ENCODE measurements at regions of chr18 and their contacts with region 1.

Region 1: DNA sequence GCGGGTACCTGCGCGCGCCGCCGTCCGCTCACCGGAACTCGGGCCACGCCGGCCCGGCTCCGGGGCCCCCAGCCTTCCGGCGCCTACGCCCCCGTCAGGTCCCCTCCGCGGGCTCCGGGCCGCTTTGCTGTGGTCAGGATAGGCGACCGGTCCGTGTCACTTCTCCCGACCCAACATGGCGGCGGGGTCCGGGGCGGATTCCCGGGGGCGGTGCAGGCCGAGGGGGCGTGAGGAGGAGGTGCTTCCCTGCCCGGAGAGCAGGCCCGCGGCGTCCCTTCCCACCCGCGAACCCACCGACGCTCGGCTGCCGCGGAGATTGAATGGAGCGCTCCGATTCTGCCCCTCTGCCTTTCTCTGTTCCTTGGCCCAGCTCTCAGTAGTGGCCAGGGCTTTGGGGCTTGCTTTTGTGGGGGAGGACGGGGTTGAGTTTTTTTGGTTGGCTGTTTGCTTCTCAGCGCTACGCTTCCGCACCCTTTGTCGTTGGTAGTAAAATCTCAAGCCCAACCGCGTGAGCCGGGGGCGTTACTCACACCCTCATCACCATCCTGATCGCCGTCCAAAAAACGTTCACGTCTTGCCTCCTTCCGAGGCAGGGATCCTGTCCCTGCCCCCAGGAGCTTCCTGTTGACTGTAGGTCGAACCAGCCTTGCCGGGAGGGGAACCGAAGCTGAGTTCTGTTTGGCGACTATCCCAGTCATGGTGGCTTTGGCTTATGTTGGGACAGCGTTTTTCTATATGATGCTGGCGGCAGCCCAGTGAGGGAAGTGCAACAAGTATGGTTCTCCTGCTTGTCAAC is 532 bp upstream of the YES1 start:
- DNase-seq: peak; percentile 87 to 88
- ATAC-seq: peak; percentile 62 to 82 (median 70)
- H3K4me3 ChIP-seq: peak overlapping the region; percentile 95
- H3K4me3 Mint-ChIP-seq: peak overlapping the region; percentile 98
- H3K27ac ChIP-seq: peak overlapping the region; percentile 93
- H3K27ac Mint-ChIP-seq: peak overlapping the region; percentile 98 to 99
- H3K4me1 ChIP-seq: peaks cover 40% of the 10 kb centered on the region
- H3K4me1 Mint-ChIP-seq: peaks cover 74 to 75% of the 10 kb centered on the region in 2 donors
- H3K27me3 ChIP-seq: no peaks in the 10 kb centered on the region
- H3K27me3 Mint-ChIP-seq: no peaks in the 10 kb centered on the region
- CTCF ChIP-seq: no peak

Region 2: DNA sequence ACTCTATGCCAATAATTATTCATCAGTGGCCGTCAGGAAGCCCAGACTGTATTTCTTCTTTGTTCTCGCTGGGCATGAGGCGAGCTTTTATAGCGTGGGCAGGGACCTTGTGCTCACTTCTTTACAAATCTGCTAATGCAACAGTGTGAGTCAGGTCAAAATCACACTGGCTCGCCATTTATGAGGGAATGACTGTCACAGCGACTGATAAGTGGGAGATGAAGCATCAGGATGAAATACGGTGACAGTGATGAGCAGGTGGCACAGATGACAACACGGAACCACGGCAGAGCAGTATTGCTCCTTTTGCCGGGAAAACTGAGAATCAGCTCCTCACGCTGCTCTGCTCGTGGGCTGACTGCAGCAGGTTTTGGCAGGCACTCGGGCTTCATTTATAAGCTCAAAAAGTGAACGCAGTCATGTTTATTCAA is 134.6 kb before region 1 on chr18:
- intact Hi-C with region 1: no loop called
- DNase-seq: no peak
- ATAC-seq: no peak
- H3K4me3 ChIP-seq: no peak overlapping the region
- H3K4me3 Mint-ChIP-seq: no peak overlapping the region
- H3K27ac ChIP-seq: no peak overlapping the region
- H3K27ac Mint-ChIP-seq: peak overlapping the region in 1 of 2 donors; percentile 53
- H3K4me1 ChIP-seq: peaks cover 11% of the 10 kb centered on the region
- H3K4me1 Mint-ChIP-seq: peaks cover 10 to 12% of the 10 kb centered on the region in 2 donors
- H3K27me3 ChIP-seq: no peaks in the 10 kb centered on the region
- H3K27me3 Mint-ChIP-seq: no peaks in the 10 kb centered on the region
- CTCF ChIP-seq: no peak

Region 3: GRCh38 chr18:711657-712400 is 100.7 kb before region 1 on chr18:
- intact Hi-C with region 1: loop called (anchors 1 kb)
- DNase-seq: peak; percentile 75 to 91
- ATAC-seq: peak; percentile 68 to 83 (median 75)
- H3K4me3 ChIP-seq: peak overlapping the region; percentile 52
- H3K4me3 Mint-ChIP-seq: peak overlapping the region; percentile 95
- H3K27ac ChIP-seq: peak overlapping the region; percentile 73
- H3K27ac Mint-ChIP-seq: peak overlapping the region; percentile 96 to 97
- H3K4me1 ChIP-seq: peaks cover 17% of the 10 kb centered on the region
- H3K4me1 Mint-ChIP-seq: peaks cover 17 to 26% of the 10 kb centered on the region in 2 donors
- H3K27me3 ChIP-seq: no peaks in the 10 kb centered on the region
- H3K27me3 Mint-ChIP-seq: no peaks in the 10 kb centered on the region
- CTCF ChIP-seq: no peak

Region 4: GRCh38 chr18:741931-742512 is 70.6 kb before region 1 on chr18:
- intact Hi-C with region 1: loop called (anchors 5 kb)
- DNase-seq: peak in 1 of 2 donors; percentile 73
- ATAC-seq: peak; percentile 81 to 89 (median 83)
- H3K4me3 ChIP-seq: no peak overlapping the region
- H3K4me3 Mint-ChIP-seq: no peak overlapping the region
- H3K27ac ChIP-seq: peak overlapping the region; percentile 9
- H3K27ac Mint-ChIP-seq: peak overlapping the region; percentile 45 to 49
- H3K4me1 ChIP-seq: peaks cover 2% of the 10 kb centered on the region
- H3K4me1 Mint-ChIP-seq: peaks cover 5 to 13% of the 10 kb centered on the region in 2 donors
- H3K27me3 ChIP-seq: no peaks in the 10 kb centered on the region
- H3K27me3 Mint-ChIP-seq: no peaks in the 10 kb centered on the region
- CTCF ChIP-seq: peak; percentile 77

Region 5: DNA sequence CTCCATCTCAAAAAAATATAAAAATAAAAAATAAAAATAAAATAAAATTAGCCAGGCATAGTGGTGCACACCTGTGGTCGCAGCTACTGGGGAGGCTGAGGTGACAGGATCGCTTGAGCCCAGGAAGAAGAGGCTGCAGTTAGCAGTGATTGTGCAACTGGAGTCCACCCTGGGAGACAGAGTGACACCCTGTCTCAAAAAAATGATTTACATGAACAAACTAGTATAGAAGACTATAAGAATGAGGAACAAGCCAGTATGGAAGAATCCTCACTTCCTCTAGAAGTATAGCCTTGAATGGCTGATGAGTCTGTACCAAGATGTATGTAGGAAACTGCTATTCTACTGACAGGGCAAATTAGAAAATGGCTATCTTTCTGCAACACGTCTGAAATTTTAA is 11.4 kb before region 1 on chr18:
- intact Hi-C with region 1: loop called (anchors 1 kb)
- DNase-seq: no peak
- ATAC-seq: no peak
- H3K4me3 ChIP-seq: no peak overlapping the region
- H3K4me3 Mint-ChIP-seq: peak overlapping the region; percentile 11
- H3K27ac ChIP-seq: no peak overlapping the region
- H3K27ac Mint-ChIP-seq: peak overlapping the region; percentile 69 to 98
- H3K4me1 ChIP-seq: peaks cover 36% of the 10 kb centered on the region
- H3K4me1 Mint-ChIP-seq: peaks cover 71 to 80% of the 10 kb centered on the region in 2 donors
- H3K27me3 ChIP-seq: no peaks in the 10 kb centered on the region
- H3K27me3 Mint-ChIP-seq: no peaks in the 10 kb centered on the region
- CTCF ChIP-seq: no peak